Activated CD4-positive, alpha-beta T cell treated with anti-CD3 and anti-CD28 coated beads, Interleukin-2, amount 10 ng/mL, durations not matched to agents 24 days and 14 days (primary cell): ENCODE measurements at regions of chr1 and their contacts with region 1.

Region 1: GRCh38 chr1:166910396-166910994 is 34.4 kb upstream of the TADA1 start:
- DNase-seq: peak; percentile 93
- H3K4me3 Mint-ChIP-seq: no peak overlapping the region
- H3K27ac Mint-ChIP-seq: no peak overlapping the region
- H3K4me1 Mint-ChIP-seq: peaks cover 24% of the 10 kb centered on the region
- H3K27me3 Mint-ChIP-seq: peaks cover 5% of the 10 kb centered on the region

Region 2: GRCh38 chr1:166875734-166876539 is 34.6 kb before region 1 on chr1 and contains the start of gene TADA1:
- intact Hi-C with region 1: loop called (anchors 1 kb)
- DNase-seq: peak; percentile 99
- H3K4me3 Mint-ChIP-seq: peak within 1 kb of the TSS; percentile 91
- H3K27ac Mint-ChIP-seq: peak within 1 kb of the TSS; percentile 100
- H3K4me1 Mint-ChIP-seq: peaks cover 46% of the 10 kb centered on the region
- H3K27me3 Mint-ChIP-seq: peaks cover 7% of the 10 kb centered on the region
- total RNA-seq, gene TADA1: 17.0 and 18.4 TPM in 2 replicates

Region 3: DNA sequence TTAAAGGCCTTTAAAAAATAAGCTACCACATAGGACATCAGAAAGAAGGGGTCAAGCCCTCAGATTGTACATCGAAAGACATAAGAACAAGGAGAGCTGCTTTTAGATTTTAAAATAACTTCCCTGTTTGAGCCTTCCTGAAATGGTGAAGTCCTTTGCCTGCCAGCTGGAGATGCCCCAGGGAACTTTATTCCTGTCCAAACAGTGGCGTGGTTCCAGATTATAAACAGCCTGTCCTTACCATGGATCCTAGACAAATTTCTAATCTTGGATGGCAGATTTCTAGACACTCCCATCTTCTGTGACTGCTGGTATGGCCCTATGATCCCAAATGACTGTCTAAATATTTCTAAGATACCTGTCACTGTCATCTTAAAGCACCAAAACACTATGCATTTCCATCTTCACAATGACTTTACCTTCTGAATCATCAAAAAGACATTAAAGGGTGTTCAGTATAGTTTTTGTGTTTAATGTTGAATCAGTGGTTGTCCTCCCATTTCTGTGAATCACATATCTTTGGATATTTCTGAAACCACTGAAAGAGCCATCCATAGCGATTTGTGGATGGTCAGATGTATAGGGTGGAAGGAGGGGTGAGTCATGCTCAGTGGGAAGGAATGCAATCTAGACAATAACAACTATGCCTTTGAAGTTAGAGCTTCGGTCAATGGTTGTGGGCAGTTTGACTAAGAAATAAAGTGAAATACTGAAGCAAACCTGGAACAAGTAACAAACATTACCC is 41.7 kb after region 1 on chr1:
- intact Hi-C with region 1: loop called (anchors 2 kb)
- DNase-seq: no peak
- H3K4me3 Mint-ChIP-seq: no peak overlapping the region
- H3K27ac Mint-ChIP-seq: peak overlapping the region; percentile 12
- H3K4me1 Mint-ChIP-seq: peaks cover 21% of the 10 kb centered on the region
- H3K27me3 Mint-ChIP-seq: peaks cover 10% of the 10 kb centered on the region

Region 4: GRCh38 chr1:166975361-166976129 is 65.0 kb after region 1 on chr1 and contains the start of gene ILDR2:
- intact Hi-C with region 1: loop called (anchors 2 kb)
- DNase-seq: peak; percentile 87
- H3K4me3 Mint-ChIP-seq: peak within 1 kb of the TSS; percentile 96
- H3K27ac Mint-ChIP-seq: peak within 1 kb of the TSS; percentile 96
- H3K4me1 Mint-ChIP-seq: peaks cover 47% of the 10 kb centered on the region
- H3K27me3 Mint-ChIP-seq: peaks cover 32% of the 10 kb centered on the region
- total RNA-seq, gene ILDR2: 10.3 and 12.5 TPM in 2 replicates

Region 5: GRCh38 chr1:167121375-167122120 is 211.1 kb after region 1 on chr1:
- intact Hi-C with region 1: loop called (anchors 5 kb)
- DNase-seq: peak; percentile 78
- H3K4me3 Mint-ChIP-seq: peak overlapping the region; percentile 86
- H3K27ac Mint-ChIP-seq: no peak overlapping the region
- H3K4me1 Mint-ChIP-seq: peaks cover 6% of the 10 kb centered on the region
- H3K27me3 Mint-ChIP-seq: peaks cover 7% of the 10 kb centered on the region